ENCODE measurements at regions of chr12 and their contacts with region 1.

Region 1: DNA sequence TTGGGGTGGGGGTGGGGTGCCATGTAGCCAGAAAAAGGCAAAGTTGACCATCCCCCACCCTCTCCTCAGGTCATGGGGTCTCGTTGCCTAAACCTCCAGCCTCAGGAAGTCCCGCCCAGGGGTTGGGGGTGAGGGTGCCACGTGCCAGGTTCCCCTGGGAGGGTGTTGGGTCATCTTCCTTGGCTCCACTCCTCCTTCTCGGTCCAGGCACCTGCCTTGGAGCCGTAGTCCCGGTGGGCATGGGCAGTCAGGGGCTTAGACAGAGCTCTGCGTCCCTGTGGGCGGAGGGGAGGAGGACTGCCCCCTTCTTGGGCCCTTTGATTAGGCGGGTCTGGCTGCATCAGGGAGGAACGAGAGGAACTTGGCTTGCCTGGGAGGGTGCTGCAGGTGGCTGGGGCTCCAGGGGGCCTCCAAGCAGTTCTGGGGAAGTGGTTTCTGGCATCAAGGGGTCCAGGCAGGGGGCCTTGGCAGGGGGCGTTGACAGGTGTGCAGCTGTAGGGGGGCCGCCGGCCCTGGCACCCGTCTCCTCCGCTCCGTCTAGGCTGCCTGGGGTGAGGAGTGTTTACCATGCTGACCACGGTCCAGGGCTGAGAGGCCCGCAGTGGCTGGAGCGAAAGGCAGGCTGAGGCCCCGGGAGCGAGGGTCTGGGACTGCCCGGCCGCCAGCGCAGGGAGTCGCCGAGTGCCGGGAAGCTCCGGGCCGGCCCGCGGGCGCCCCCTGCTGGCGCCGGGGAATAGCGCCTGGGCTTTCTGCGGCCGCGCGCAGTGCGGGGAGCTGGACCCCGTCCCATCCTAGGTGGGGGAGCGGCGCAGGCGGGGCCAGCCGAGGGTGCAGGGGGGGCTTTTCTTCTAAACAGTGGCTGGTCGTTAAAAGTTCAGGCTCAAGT is 7.9 kb downstream of the SETD1B start:
- DNase-seq: peak; percentile 80
- ATAC-seq: peak; percentile 77
- H3K4me3 Mint-ChIP-seq: peak overlapping the region; percentile 87
- H3K27ac Mint-ChIP-seq: peak overlapping the region; percentile 86
- H3K4me1 Mint-ChIP-seq: peaks cover 32% of the 10 kb centered on the region
- H3K27me3 Mint-ChIP-seq: no peaks in the 10 kb centered on the region
- CTCF ChIP-seq: peak; percentile 98

Region 2: DNA sequence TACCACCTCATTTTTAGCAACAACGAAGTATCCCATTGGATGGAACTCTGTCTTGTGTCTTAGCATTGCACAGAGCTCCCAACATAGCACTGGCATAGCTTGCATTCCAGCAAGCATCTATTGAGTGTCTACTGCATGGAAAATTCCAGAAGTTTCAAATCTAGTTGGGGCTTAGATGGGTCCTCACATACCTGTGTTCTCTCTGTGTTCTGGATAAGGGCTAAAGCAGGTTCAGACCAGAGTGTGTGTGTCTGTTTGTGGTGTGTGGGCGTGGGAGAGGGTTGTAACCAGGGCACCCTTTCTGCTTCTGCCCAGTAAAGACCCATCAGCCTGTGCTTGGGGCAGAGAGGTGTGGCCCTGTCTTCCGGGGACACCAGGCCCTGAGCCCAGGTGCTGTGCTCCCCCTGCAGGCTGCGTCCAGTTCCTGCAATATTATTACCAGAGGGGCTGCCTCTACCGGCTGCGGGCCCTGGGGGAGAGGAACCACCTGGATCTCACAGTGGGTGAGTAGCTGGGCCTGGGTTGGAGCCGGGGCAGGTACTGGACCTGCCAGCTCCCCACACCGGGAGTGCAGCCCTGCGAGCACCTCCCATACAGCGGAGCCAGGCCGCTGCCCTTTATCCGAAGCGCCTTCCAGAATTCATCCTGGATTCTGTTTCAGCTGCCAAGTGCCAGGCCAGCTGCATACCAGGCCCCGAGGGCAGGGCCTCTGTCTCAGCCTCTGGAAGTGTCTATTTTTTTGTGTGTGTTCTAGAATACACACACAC is 38.5 kb before region 1 on chr12:
- CTCF ChIA-PET with region 1: interaction called, 27 read pairs
- POLR2A ChIA-PET with region 1: no interaction called
- DNase-seq: peak; percentile 88
- ATAC-seq: peak; percentile 77
- H3K4me3 Mint-ChIP-seq: no peak overlapping the region
- H3K27ac Mint-ChIP-seq: peak overlapping the region; percentile 72
- H3K4me1 Mint-ChIP-seq: peaks cover 16% of the 10 kb centered on the region
- H3K27me3 Mint-ChIP-seq: no peaks in the 10 kb centered on the region
- CTCF ChIP-seq: peak; percentile 77

Region 3: DNA sequence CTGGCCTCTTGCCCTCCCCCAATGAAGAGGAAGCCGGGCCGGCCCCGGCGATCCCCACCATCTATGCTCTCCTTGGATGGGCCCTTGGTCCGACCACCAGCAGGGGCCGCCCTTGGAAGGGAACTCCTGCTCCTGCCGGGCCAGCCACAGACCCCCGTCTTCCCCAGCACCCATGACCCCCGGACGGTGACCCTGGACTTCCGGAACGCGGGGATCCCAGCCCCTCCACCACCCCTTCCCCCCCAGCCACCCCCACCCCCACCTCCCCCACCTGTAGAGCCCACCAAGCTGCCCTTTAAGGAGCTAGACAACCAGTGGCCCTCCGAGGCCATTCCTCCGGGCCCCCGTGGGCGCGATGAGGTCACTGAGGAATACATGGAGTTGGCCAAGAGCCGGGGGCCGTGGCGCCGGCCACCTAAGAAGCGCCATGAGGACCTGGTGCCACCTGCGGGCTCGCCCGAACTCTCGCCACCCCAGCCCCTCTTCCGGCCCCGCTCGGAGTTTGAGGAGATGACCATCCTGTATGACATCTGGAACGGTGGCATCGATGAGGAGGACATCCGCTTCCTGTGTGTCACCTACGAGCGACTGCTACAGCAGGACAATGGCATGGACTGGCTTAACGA is 11.5 kb after region 1 on chr12:
- CTCF ChIA-PET with region 1: interaction called, 26 read pairs
- POLR2A ChIA-PET with region 1: interaction called, 4 read pairs
- DNase-seq: no peak
- ATAC-seq: peak; percentile 48; the same call in 1 of the 2 replicates
- H3K4me3 Mint-ChIP-seq: no peak overlapping the region
- H3K27ac Mint-ChIP-seq: no peak overlapping the region
- H3K4me1 Mint-ChIP-seq: no peaks in the 10 kb centered on the region
- H3K27me3 Mint-ChIP-seq: no peaks in the 10 kb centered on the region
- CTCF ChIP-seq: no peak

Region 4: GRCh38 chr12:121839106-121839992 is 27.7 kb after region 1 on chr12:
- CTCF ChIA-PET with region 1: interaction called, 34 read pairs
- POLR2A ChIA-PET with region 1: no interaction called
- DNase-seq: peak; percentile 100
- ATAC-seq: peak; percentile 97
- H3K4me3 Mint-ChIP-seq: peak overlapping the region; percentile 97
- H3K27ac Mint-ChIP-seq: peak overlapping the region; percentile 98
- H3K4me1 Mint-ChIP-seq: peaks cover 12% of the 10 kb centered on the region
- H3K27me3 Mint-ChIP-seq: peaks cover 16% of the 10 kb centered on the region
- CTCF ChIP-seq: no peak

Region 5: GRCh38 chr12:121894633-121895032 is 83.0 kb after region 1 on chr12:
- CTCF ChIA-PET with region 1: interaction called, 20 read pairs
- POLR2A ChIA-PET with region 1: no interaction called
- DNase-seq: peak; percentile 30
- ATAC-seq: peak; percentile 86
- H3K4me3 Mint-ChIP-seq: no peak overlapping the region
- H3K27ac Mint-ChIP-seq: no peak overlapping the region
- H3K4me1 Mint-ChIP-seq: peaks cover 14% of the 10 kb centered on the region
- H3K27me3 Mint-ChIP-seq: peaks cover 8% of the 10 kb centered on the region
- CTCF ChIP-seq: 0 out of 2 replicates have a peak, but pooled peaks have one; percentile 18

Region 6: GRCh38 chr12:121925358-121925695 is 113.7 kb after region 1 on chr12:
- CTCF ChIA-PET with region 1: no interaction called
- POLR2A ChIA-PET with region 1: no interaction called
- DNase-seq: no peak
- ATAC-seq: no peak
- H3K4me3 Mint-ChIP-seq: no peak overlapping the region
- H3K27ac Mint-ChIP-seq: peak overlapping the region; percentile 54; the same call in 1 of the 2 replicates
- H3K4me1 Mint-ChIP-seq: peaks cover 30% of the 10 kb centered on the region
- H3K27me3 Mint-ChIP-seq: no peaks in the 10 kb centered on the region; the same call in 1 of the 2 replicates
- CTCF ChIP-seq: no peak